Activated naive CD4-positive, alpha-beta T cell treated with anti-CD3 and anti-CD28 coated beads for 36 hours (primary cell): ENCODE measurements at regions of chr12 and their contacts with region 1.

Region 1: DNA sequence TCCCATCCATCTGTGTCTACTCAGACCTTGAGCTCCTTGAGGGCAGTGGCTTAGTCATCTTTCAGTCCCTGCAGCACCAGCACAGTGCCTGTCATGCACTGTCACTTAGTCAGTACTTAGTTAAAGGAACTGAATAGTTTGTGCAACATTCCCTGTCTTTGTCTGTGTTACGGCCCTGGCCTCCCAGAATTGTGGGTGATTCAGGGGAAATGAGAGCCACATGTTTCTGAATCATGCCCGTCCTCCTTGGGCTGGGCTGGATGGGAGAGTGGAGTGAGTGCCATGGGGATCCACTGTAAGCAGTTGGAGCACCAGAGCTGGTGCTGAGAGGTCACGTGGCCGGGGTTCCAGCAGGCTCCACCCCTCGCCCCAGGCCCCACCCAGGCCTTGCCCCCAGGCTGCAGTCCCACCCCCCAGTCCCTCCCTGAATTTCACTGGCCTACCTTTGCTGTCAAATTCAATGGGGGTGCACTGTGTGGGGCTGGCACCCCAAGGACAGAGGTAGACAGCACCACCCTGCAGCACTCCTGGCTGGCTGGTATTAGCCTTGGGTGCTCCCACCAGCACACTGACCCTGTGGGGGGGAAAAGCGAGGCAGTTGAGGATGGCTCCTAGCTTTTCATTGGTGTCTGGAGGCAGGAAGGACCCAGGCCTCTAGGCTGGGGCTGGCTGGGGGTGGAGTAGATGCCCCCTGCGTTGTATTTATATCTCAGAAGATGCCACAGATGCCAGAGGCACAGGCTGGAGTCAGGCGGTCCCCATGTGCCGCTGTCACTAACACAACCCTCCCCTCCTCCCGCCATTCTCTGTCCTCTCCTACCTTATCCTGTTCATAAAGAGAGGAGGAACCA is 7.5 kb downstream of the ITGA5 start:
- DNase-seq: peak; percentile 71
- H3K4me3 Mint-ChIP-seq: peak overlapping the region; percentile 38
- H3K27ac Mint-ChIP-seq: peak overlapping the region; percentile 96
- H3K4me1 Mint-ChIP-seq: peaks cover 58% of the 10 kb centered on the region
- H3K27me3 Mint-ChIP-seq: no peaks in the 10 kb centered on the region

Region 2: DNA sequence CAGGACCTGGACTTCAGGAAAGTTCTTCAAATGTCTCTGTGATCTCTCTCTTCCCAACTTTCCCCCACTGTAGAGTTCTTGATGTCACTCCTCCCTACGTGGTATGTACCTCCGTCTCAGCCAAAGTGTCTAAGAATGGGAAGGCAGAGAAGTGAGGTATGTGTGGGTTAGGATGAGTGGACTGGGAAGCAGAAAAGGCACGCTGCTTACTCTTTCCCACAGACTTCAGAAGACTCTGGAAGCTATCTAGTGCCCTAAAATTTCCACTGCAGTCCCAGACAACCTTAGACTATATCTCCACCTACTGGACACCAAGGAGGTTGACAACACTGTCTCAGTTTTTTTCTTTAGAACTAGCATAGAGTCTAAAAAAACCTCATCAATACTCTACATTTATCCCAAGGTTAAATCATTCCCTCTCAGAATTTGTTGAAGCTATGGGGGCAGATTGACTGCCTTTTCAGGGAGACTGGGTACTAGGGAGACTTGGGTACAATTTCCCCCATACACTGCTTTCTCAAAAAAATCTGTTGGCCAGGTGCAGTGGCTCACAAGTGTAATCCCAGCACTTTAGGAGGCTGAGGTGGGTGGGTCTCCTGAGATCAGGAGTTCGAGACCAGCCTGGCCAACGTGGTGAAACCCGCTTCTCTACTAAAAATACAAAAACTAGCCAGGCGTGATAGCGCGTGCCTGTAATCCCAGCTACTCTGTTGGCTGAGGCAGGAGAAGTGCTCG is 28.1 kb after region 1 on chr12:
- CTCF ChIA-PET with region 1: interaction called, 384 read pairs
- intact Hi-C with region 1: loop called (anchors 1 kb)
- DNase-seq: no peak
- H3K4me3 Mint-ChIP-seq: no peak overlapping the region
- H3K27ac Mint-ChIP-seq: no peak overlapping the region
- H3K4me1 Mint-ChIP-seq: peaks cover 13% of the 10 kb centered on the region
- H3K27me3 Mint-ChIP-seq: no peaks in the 10 kb centered on the region

Region 3: GRCh38 chr12:54472494-54473262 is 61.1 kb after region 1 on chr12:
- CTCF ChIA-PET with region 1: no interaction called
- intact Hi-C with region 1: no loop called
- DNase-seq: no peak
- H3K4me3 Mint-ChIP-seq: peak overlapping the region; percentile 48
- H3K27ac Mint-ChIP-seq: no peak overlapping the region
- H3K4me1 Mint-ChIP-seq: no peaks in the 10 kb centered on the region
- H3K27me3 Mint-ChIP-seq: no peaks in the 10 kb centered on the region

Region 4: GRCh38 chr12:54560374-54560858 is 148.8 kb after region 1 on chr12:
- CTCF ChIA-PET with region 1: no interaction called
- intact Hi-C with region 1: loop called (anchors 5 kb)
- DNase-seq: peak; percentile 97
- H3K4me3 Mint-ChIP-seq: peak overlapping the region; percentile 72
- H3K27ac Mint-ChIP-seq: peak overlapping the region; percentile 80
- H3K4me1 Mint-ChIP-seq: peaks cover 31% of the 10 kb centered on the region
- H3K27me3 Mint-ChIP-seq: peaks cover 3% of the 10 kb centered on the region